ENCODE measurements at regions of chr7 and their contacts with region 1.

Region 1: GRCh38 chr7:2314209-2314955 is at the start of gene SNX8:
- DNase-seq: peak; percentile 96
- total RNA-seq, gene SNX8: 18.9 TPM

Region 2: DNA sequence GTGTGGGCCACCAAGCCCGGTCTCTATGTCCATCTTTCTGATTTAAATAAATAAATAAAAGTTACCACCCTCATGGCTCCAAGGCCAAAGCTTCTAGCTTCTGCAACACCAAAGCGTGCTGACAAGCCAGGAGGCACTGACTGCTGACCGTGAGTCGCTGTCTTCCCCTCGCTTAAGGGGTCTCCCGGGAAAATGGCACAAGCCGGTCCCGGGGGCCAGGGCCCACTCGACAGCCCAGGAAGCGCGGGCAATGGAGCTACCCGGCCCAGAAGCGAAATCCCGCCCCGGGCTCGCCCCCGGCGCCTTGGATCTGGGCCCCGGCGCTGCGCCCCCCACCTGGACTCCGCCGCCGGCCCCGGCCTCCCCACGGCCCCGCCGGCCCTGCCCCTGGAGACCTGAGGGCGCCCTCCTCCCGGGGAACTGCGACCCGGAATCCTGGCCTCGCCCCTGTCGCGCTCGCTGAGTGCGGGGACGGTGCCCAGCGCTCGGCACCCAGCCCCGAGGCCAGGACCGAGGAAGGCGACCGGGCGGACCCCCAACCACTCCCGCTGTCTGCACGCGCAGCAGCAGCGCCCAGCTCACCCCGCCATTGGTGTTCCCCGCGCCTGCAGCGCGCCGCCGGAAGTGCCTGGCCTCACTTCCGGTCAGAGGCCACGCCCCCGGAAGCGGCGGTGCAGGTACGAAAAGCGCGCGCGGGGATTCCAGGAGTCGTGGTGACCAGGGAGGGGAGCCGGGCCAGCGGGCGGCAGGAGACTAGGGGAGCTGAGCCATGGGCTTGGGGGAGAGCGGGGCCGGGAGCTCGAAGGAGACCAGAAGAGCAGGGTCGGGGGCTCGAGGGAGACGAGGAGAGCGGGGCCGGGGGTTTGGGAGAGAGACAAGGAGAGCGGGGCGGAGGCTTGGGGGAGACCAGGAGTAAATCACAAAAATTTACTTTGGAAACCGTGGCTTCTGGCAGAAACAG is 72.5 kb before region 1 on chr7 and contains the starts of genes MRM2 and NUDT1:
- intact Hi-C with region 1: loop called (anchors 5 kb)
- DNase-seq: peak; percentile 92
- total RNA-seq, gene MRM2: 15.6 TPM
- total RNA-seq, gene NUDT1: 9.6 TPM

Region 3: GRCh38 chr7:2403014-2403717 is 88.8 kb after region 1 on chr7 and contains the start of gene CHST12:
- intact Hi-C with region 1: no loop called
- DNase-seq: peak; percentile 98
- total RNA-seq, gene CHST12: 13.8 TPM